ENCODE measurements at regions of chr20 and their contacts with region 1.

Region 1: GRCh38 chr20:36717657-36718056 is 28.2 kb downstream of the NDRG3 start:
- DNase-seq: no peak
- ATAC-seq: peak; percentile 69

Region 2: DNA sequence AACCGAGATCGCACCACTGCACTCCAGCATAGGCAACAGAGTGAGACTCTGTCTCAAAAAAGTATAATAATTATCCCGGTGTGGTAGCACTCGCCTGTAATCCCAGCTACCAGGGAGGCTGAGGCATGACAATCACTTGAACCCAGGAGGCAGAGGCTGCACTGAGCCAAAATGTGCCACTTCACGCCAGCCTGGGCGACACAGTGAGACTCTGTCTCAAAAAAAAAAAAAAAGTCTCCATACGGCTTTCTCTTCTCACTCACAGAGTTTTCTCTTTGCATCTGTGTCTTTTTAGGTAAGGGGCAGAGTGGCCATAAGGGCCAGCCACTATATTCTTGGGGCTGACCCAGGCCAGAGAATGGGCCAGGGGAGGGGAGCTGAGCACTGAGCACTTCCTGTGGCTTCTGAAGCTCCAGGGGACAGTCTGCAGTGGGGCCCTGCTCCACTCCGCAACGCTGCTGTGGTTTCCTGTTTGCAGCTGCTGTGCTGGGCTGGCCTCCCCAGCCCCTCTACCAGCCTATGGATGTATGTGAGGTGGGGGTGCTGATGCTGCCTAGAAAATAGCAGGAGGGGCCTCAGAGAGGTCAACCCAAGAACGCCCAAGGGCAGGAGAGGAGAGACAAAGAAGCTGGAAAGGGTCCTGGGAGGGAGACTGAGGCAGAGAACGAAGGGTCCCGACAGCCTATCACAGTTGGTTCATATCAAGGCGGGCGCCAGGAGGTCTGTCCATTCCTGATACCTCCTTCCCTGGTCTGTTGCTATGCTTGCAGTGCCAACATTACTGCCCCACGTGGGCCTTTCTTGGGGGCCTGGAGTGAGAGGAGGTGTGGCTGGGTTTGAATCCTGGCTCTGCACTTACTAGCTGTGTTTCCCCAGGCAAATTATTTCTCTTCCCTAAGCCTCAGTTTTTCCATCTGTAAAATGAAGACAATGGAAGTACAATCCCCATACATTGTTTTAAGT is 87.7 kb before region 1 on chr20:
- intact Hi-C with region 1: no loop called
- DNase-seq: no peak
- ATAC-seq: no peak

Region 3: GRCh38 chr20:36754656-36755222 is 37.1 kb after region 1 on chr20:
- intact Hi-C with region 1: loop called (anchors 5 kb)
- DNase-seq: no peak
- ATAC-seq: peak; percentile 90

Measured in Right ventricle myocardium superior (tissue), 1 donor.